Pancreas (tissue), 10 donors: ENCODE measurements at regions of chr11 and their contacts with region 1.

Region 1: GRCh38 chr11:25981998-25982397 is 349.9 kb upstream of the ANO3 start:
- DNase-seq: peak in 1 of 6 donors; percentile 25
- ATAC-seq: peak; percentile 64 to 91 (median 86)
- H3K4me3 ChIP-seq: no peak overlapping the region
- H3K27ac ChIP-seq: no peak overlapping the region
- H3K4me1 ChIP-seq: no peaks in the 10 kb centered on the region
- H3K27me3 ChIP-seq: no peaks in the 10 kb centered on the region
- CTCF ChIP-seq: peak in 3 of 4 donors; percentile 26 to 42 (median 39)

Region 2: GRCh38 chr11:25899761-25900160 is 82.2 kb before region 1 on chr11:
- intact Hi-C with region 1: no loop called
- DNase-seq: no peak
- ATAC-seq: no peak
- H3K4me3 ChIP-seq: no peak overlapping the region
- H3K27ac ChIP-seq: no peak overlapping the region
- H3K4me1 ChIP-seq: no peaks in the 10 kb centered on the region
- H3K27me3 ChIP-seq: no peaks in the 10 kb centered on the region
- CTCF ChIP-seq: no peak

Region 3: DNA sequence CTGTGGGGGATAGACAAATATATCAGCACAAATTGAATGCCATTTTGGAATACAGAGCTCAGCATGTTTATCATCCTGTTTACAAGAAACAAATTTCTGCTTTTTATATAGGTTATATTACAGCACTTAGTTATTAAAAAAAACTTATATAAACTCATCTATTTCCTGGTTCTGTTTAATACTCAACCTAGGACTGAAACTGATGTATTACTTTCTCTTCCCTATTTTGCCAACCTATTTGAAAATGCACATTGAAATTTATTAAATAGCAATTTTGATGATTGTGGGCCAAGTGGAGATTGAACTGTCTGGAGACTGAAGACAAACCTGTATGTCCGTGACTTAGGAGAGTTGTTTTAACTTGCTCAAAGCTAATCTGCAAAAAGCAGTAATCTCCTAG is 61.7 kb after region 1 on chr11:
- intact Hi-C with region 1: no loop called
- DNase-seq: no peak
- ATAC-seq: no peak
- H3K4me3 ChIP-seq: no peak overlapping the region
- H3K27ac ChIP-seq: no peak overlapping the region
- H3K4me1 ChIP-seq: no peaks in the 10 kb centered on the region
- H3K27me3 ChIP-seq: no peaks in the 10 kb centered on the region
- CTCF ChIP-seq: no peak

Region 4: GRCh38 chr11:26227296-26227695 is 245.3 kb after region 1 on chr11:
- intact Hi-C with region 1: loop called in 1 of 3 experiments (anchors 5 kb)
- DNase-seq: no peak
- ATAC-seq: peak in 3 of 4 donors; percentile 76 to 86 (median 79)
- H3K4me3 ChIP-seq: no peak overlapping the region
- H3K27ac ChIP-seq: no peak overlapping the region
- H3K4me1 ChIP-seq: no peaks in the 10 kb centered on the region
- H3K27me3 ChIP-seq: no peaks in the 10 kb centered on the region
- CTCF ChIP-seq: peak in 3 of 4 donors; percentile 10 to 35 (median 12)

Region 5: GRCh38 chr11:26276798-26277424 is 294.9 kb after region 1 on chr11:
- intact Hi-C with region 1: loop called in 1 of 3 experiments (anchors 10 kb)
- DNase-seq: peak in 5 of 6 donors; percentile 14 to 58 (median 33)
- ATAC-seq: peak; percentile 66 to 94 (median 86)
- H3K4me3 ChIP-seq: no peak overlapping the region
- H3K27ac ChIP-seq: no peak overlapping the region
- H3K4me1 ChIP-seq: no peaks in the 10 kb centered on the region
- H3K27me3 ChIP-seq: no peaks in the 10 kb centered on the region
- CTCF ChIP-seq: peak; percentile 70 to 89 (median 88)